ENCODE measurements at regions of chr2 and their contacts with region 1.

Region 1: DNA sequence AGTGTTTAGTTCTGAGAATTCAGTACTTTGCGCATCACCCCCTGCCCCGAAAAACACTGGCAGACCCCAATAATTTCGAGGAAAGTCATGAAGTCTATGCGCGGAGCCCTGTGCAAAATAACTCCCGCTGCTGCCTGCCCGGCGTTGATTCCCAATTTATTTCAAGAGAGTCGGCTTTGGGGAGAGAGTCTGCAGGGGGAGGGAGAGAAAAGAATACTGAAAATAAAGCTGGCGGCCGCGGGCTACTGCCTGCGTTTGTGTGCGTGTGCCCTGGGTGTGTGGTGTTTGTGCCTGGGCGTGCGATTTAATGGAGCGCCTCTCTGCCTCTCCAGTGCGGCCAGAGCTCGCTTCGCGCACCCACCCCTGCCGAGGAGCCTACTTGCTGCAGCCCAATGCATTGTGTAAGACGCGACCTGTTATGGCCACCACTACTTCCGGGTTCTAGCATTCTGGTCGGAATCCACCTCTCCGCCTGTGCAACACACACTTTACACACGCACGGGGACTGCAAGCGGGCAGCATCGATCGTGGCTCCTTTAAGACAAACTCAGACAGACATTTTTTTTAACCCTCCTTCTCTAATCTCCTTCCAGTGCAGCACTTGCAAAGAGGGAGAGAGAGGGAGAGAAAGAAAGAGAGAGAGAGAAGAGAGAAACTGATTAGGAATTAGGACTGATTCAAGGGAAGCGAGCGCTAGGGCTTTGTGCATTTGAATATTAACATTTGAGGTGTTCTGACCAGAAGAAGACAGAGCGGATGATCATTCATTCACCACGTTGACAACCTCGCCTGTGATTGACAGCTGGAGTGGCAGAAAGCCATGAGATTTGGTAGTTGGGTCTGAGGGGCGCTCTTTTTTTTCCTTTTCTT is at the start of gene MEIS1:
- DNase-seq: peak; percentile 76

Region 2: DNA sequence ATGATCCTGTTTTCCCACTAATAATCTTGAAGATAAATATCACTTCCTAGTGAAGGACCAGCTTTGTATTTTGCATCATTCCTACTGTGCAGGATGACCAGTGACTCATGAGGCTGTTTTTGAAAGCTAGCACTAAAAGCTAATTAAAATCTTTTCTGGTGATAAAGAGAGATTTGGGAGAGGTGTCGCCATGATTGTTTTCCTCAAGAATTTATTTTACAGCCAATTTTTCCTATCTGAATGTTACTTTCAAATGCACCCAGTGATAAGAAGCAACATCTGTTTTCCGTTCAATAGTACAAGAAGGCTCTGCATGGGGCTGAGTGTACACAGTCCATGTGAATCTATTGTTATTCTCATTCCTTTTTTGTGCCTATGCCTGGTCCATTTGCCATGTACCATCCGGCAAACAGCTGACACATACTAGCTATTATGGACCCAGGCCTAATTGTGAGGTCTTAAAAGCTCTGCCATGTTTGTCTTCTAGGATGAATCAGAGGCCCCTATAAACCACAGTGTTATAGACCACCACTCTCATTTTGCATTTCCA is 28.4 kb after region 1 on chr2:
- CTCF ChIA-PET with region 1: interaction called, 3 read pairs
- POLR2A ChIA-PET with region 1: interaction called, 19 read pairs
- DNase-seq: no peak

Region 3: GRCh38 chr2:66509326-66509811 is 74.5 kb after region 1 on chr2:
- CTCF ChIA-PET with region 1: interaction called, 4 read pairs
- POLR2A ChIA-PET with region 1: interaction called, 38 read pairs
- DNase-seq: no peak

Region 4: DNA sequence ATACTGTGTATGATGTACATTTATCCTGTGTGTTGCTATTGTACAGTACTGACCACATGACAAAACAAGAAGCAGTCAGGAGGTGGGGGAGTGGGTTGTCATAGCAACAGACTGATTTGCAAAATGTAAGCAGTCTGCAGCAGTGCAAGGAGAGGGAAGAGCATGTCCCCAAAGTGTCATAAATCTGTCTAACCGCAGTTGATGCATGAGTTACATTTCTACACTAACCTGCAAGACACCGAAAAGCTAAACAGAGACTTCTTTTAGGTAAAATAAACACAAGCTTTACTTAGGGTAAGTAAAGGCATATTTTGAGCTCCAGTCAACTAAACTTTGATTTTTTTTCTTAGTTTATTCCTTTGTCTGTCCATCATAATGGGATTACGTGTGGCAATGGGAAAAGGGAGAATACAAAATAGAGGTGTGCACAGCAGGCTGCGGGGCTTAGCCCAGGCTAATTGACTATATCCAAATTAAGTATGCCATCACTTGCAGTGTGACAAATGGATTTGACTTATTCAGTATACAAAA is 134.5 kb after region 1 on chr2:
- CTCF ChIA-PET with region 1: interaction called, 7 read pairs
- POLR2A ChIA-PET with region 1: interaction called, 64 read pairs
- DNase-seq: peak; percentile 57

Region 5: DNA sequence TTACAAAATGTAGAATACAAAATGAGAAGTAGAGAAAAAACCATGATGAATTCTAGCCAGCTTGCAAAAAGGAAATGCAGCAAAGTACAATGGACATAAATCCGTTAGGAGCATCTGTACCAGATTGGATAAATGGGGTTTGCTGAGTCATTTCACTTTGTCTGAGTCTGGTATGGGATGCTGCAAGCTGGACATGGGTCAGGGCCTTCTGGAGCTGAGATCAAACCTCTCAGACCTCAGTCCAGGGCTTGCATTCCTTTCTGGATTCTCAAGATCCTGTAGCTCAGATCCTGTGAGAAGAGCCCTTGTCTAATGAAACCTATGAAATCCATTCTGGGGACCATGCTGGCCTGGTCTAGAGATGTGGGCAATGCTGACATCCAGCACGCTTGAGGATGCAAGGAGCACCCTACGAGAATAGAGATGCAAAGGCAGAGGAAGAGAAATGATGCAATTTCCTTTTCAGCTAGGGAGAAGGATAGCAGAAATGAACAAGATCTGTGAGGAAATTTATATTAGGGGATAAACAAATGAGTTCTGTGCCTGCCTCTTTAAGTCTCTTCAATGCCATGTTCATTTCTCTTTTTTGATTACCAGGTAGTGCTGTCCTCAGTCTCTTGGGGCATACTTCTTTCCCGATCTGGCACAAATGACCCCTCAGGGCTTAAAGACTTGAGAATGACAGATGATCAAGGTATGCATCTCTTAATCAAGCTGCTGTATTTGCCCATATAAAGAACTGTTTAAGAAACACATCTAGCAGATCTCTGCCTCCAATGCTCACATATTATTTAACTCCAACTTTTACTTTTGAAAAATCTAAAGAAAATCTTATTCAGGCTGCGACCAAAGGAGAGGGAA is 230.4 kb after region 1 on chr2:
- CTCF ChIA-PET with region 1: no interaction called
- POLR2A ChIA-PET with region 1: no interaction called
- DNase-seq: no peak

Measured in HEK293T (cell line).